Ovary (tissue), 10 donors: ENCODE measurements at regions of chr2 and their contacts with region 1.

Region 1: DNA sequence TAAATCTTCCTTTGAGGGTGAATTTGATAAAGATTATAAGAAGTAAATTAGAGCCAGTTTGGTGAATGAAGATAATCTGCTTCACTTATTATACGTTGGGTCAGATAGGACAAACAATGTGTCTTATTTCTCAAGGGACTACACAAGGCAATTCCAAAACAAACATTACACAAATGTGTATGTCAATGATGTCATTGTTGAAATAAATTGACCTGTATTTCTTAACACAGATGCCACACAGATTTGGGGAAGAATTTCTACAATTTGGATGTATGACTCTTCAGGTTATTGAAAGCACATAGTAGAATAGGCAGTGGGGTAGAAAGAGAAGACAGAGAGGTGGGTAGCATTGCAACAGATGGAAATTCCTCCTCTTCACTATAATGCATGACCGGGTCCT is 6.9 kb upstream of the CRIM1 start:
- DNase-seq: no peak
- H3K4me3 ChIP-seq: no peak overlapping the region
- H3K27ac ChIP-seq: no peak overlapping the region
- H3K4me1 ChIP-seq: no peaks in the 10 kb centered on the region
- H3K27me3 ChIP-seq: no peaks in the 10 kb centered on the region
- CTCF ChIP-seq: no peak
- EP300 ChIP-seq: no peak
- POLR2A ChIP-seq: no peak

Region 2: DNA sequence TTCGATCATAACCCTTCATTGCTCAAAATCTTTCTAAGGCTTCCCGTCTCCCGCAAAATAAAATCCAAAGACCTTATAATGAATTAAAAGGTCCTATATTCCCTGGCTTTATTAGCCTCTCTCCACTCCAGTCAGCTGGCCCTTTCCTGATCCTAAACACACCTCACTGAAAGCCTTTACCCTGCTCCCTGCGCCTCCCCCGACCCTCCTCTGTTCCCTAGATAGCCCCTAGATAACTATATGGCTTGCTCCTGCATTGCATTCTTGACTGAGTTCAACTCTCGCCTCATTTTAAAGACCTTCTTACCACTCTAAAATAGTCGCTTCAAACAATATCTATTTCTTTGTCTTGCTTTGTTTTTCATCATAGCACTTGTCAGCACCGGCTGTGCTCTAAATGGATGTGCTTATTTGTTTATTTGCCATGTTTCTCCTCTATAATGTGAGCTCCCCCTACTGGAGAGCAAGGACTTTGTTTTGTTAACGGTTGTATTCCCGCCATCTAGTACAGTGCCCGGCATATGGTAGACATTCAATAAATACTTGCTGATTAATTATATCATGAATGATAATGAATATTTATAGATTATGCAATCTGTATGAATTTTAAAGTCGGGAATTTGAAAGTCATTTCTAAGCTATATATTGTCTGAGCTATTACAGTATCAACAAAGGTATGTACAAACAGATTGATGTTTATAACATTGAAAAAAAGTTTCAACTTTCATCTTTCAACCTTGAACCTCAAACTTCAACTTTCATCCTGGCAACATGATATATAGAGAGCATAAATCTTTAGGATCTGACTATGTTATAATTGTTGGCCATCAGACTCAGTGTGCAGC is 315.4 kb after region 1 on chr2:
- intact Hi-C with region 1: loop called in 3 of 4 experiments (anchors 5 to 10 kb)
- DNase-seq: peak in 1 of 5 donors; percentile 28
- H3K4me3 ChIP-seq: no peak overlapping the region
- H3K27ac ChIP-seq: no peak overlapping the region
- H3K4me1 ChIP-seq: no peaks in the 10 kb centered on the region
- H3K27me3 ChIP-seq: no peaks in the 10 kb centered on the region
- CTCF ChIP-seq: peak in 2 of 3 donors; percentile 69 to 70
- EP300 ChIP-seq: no peak
- POLR2A ChIP-seq: no peak